PC-9 (cell line): ENCODE measurements at regions of chr15 and their contacts with region 1.

Region 1: GRCh38 chr15:91942676-91943576 is 89.4 kb downstream of the SLCO3A1 start:
- DNase-seq: peak; percentile 79 to 97
- H3K4me3 ChIP-seq: peak overlapping the region; percentile 51
- H3K27ac ChIP-seq: peak overlapping the region; percentile 100
- H3K4me1 ChIP-seq: peaks cover 83% of the 10 kb centered on the region
- H3K27me3 ChIP-seq: no peaks in the 10 kb centered on the region
- CTCF ChIP-seq: no peak

Region 2: GRCh38 chr15:91302588-91303439 is 640.1 kb before region 1 on chr15:
- CTCF ChIA-PET with region 1: interaction called, 3 read pairs
- POLR2A ChIA-PET with region 1: no interaction called
- intact Hi-C with region 1: loop called (anchors 2 kb)
- DNase-seq: peak; percentile 29 to 61
- H3K4me3 ChIP-seq: no peak overlapping the region
- H3K27ac ChIP-seq: no peak overlapping the region
- H3K4me1 ChIP-seq: 0 out of 2 replicates have a peak, but pooled peaks cover 4% of the 10 kb centered on the region
- H3K27me3 ChIP-seq: no peaks in the 10 kb centered on the region
- CTCF ChIP-seq: peak; percentile 86

Region 3: GRCh38 chr15:91706322-91707032 is 236.4 kb before region 1 on chr15:
- CTCF ChIA-PET with region 1: interaction called, 10 read pairs
- POLR2A ChIA-PET with region 1: no interaction called
- intact Hi-C with region 1: loop called (anchors 5 kb)
- DNase-seq: peak; percentile 57 to 60
- H3K4me3 ChIP-seq: no peak overlapping the region
- H3K27ac ChIP-seq: no peak overlapping the region
- H3K4me1 ChIP-seq: peaks cover 14% of the 10 kb centered on the region
- H3K27me3 ChIP-seq: no peaks in the 10 kb centered on the region
- CTCF ChIP-seq: peak; percentile 92

Region 4: DNA sequence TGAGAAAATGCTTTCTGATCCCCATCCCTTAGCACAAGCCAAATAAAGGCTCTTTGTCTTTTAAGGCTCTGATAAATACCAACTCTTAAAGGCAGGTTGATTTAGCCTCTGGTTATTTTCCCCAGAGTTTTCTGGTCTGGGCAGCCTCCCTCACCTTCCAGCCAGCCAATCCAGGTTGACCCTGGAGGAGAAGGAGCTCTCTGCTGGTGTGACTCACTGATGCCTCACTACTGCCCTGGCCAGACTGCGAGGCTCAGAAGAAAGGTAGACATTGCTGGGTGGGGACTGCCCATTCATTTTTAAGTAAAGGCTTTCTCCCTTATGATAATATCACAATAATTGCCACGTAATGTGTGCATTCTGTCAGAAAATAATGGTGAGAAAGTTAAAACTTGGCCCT is 52.3 kb before region 1 on chr15:
- CTCF ChIA-PET with region 1: interaction called, 9 read pairs
- POLR2A ChIA-PET with region 1: interaction called, 4 read pairs
- intact Hi-C with region 1: loop called (anchors 2 kb)
- DNase-seq: peak; percentile 78 to 89
- H3K4me3 ChIP-seq: no peak overlapping the region
- H3K27ac ChIP-seq: peak overlapping the region; percentile 64
- H3K4me1 ChIP-seq: peaks cover 41% of the 10 kb centered on the region
- H3K27me3 ChIP-seq: no peaks in the 10 kb centered on the region
- CTCF ChIP-seq: no peak

Region 5: GRCh38 chr15:91965501-91966184 is 22.7 kb after region 1 on chr15:
- CTCF ChIA-PET with region 1: no interaction called
- POLR2A ChIA-PET with region 1: no interaction called
- intact Hi-C with region 1: loop called (anchors 1 kb)
- DNase-seq: peak; percentile 89 to 98
- H3K4me3 ChIP-seq: peak overlapping the region; percentile 24; the same call in 1 of the 2 replicates
- H3K27ac ChIP-seq: peak overlapping the region; percentile 98
- H3K4me1 ChIP-seq: peaks cover 50% of the 10 kb centered on the region
- H3K27me3 ChIP-seq: no peaks in the 10 kb centered on the region
- CTCF ChIP-seq: no peak

Region 6: DNA sequence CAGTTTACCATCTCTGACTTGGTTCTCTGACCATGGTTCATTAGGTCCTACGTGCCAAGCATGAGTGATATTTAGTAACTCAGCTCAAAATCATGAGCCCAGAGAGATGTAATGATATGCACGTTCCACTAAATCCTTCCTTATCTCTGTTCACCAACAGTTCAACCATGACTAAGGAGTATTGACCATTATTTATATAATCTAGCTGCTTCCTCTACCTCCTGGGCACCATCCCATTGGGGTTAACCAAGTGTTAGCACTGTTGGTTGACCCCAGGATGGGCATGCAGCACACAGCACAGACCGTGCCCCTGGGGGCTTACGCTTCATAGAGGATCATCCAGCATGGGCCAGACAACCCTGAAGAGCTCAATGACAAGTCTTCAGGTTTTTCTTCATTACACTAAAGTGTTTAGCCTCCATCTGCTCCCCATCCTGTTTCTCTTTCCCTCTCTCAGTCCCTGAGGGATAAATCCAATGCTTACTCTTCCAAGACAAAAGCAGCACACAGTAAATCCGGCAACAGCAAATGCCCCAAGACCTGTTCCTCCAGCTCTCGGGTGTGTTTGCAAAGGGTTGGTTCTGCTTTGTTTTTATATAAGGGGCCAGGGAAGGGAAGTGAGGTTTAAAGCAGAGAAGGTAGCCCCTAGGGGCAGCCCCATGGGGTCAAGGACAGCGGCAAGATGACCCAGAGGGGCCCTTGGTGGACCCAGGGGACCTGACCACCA is 702.3 kb after region 1 on chr15:
- CTCF ChIA-PET with region 1: no interaction called
- POLR2A ChIA-PET with region 1: no interaction called
- intact Hi-C with region 1: loop called (anchors 10 kb)
- DNase-seq: peak; percentile 61 to 95
- H3K4me3 ChIP-seq: peak overlapping the region; percentile 63; the same call in 1 of the 2 replicates
- H3K27ac ChIP-seq: peak overlapping the region; percentile 97
- H3K4me1 ChIP-seq: peaks cover 99% of the 10 kb centered on the region
- H3K27me3 ChIP-seq: no peaks in the 10 kb centered on the region
- CTCF ChIP-seq: no peak